ENCODE measurements at regions of chr1 and their contacts with region 1.

Region 1: DNA sequence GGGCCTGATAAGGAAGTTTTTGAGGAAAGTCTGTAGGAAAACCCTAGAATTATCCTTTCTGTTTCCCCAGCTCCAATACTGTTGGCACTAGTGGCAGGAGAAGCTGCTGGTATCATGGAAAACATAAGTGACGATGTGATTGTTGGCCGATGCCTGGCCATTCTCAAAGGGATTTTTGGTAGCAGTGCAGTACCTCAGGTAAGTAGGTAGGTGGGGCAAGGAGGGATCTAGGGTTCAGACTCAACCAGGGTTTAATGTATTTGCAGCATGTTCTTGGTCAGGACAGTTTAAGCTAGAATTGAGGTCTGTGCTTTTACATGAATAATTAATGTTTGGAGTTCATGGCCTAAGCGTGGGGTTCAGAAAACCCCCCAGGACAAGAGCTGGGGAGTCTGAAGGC is 62.1 kb downstream of the KDM1A start:
- DNase-seq: no peak
- H3K4me3 ChIP-seq: no peak overlapping the region
- H3K27ac ChIP-seq: no peak overlapping the region
- H3K4me1 ChIP-seq: peaks cover 0 to 4% (median 0%) of the 10 kb centered on the region in 4 donors
- H3K27me3 ChIP-seq: no peaks in the 10 kb centered on the region
- CTCF ChIP-seq: peak in 1 of 5 experiments; percentile 15
- EP300 ChIP-seq: no peak
- POLR2A ChIP-seq: no peak

Region 2: DNA sequence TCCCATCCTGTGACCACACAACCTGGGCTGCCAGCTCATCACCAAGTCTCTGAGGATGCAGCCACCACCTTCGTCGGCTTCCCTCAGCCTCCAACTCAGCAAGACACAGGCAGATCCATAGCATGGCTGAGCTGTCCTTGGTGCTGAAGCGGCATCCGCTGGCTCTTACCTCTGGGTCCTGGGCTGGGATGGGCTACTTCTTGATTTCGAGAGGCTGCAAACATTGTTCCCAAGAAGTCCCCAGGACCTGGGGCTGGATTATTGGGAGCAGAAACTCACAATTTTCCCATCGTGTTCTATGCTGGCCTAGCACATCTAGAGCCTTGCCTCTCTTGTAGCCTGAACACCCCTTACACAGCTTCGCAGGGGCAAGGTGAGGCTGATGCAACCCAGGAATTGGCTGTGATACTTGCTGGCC is 469.8 kb before region 1 on chr1:
- in situ Hi-C with region 1: no loop called
- intact Hi-C with region 1: no loop called
- DNase-seq: no peak
- H3K4me3 ChIP-seq: no peak overlapping the region
- H3K27ac ChIP-seq: no peak overlapping the region
- H3K4me1 ChIP-seq: no peaks in the 10 kb centered on the region
- H3K27me3 ChIP-seq: peaks cover 73% of the 10 kb centered on the region
- CTCF ChIP-seq: no peak
- EP300 ChIP-seq: no peak
- POLR2A ChIP-seq: no peak

Region 3: DNA sequence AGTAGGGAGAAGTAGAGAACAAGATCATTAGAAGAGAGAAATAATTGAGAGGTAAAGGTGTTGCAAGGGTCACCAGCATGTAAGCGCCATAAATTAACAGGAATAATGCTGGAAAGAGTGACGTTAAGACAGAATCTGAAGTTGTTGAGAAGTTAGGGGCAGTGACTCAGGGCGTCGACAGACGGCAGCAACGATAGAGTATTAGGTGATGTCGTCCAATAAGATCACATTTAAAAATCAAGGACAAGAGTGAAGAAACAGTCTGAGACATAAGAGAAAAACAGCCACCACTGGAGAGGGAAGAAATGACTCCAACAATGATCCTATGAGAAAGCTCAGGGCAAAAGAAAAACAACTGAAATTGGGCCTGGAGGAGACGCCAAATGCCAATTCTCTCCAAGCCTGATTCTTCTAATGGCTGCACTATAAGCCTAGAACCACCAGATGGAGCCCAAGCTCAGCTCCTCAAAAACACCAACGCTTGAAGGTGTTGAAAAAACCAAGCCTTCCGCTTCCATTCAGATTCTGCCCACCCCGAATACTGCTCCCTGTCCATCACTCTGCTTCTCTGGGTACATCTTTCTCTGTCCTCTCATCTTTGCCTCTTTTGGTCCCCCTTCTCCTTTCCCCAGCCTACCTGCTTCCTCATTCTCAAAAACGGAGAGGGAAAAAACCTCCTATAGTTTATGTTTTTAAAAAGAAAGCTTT is 17.2 kb after region 1 on chr1:
- in situ Hi-C with region 1: no loop called
- intact Hi-C with region 1: loop called (anchors 1 kb)
- DNase-seq: peak; percentile 65
- H3K4me3 ChIP-seq: no peak overlapping the region
- H3K27ac ChIP-seq: no peak overlapping the region
- H3K4me1 ChIP-seq: peaks cover 28 to 56% (median 34%) of the 10 kb centered on the region in 4 donors
- H3K27me3 ChIP-seq: no peaks in the 10 kb centered on the region
- CTCF ChIP-seq: peak; percentile 87 to 96 (median 93)
- EP300 ChIP-seq: no peak
- POLR2A ChIP-seq: no peak

Measured in transverse colon (tissue), 4 donors.